ENCODE measurements at regions of chr3 and their contacts with region 1.

Region 1: GRCh38 chr3:97793420-97794019 is 28.3 kb upstream of the CRYBG3 start:
- DNase-seq: peak; percentile 80
- H3K4me3 Mint-ChIP-seq: no peak overlapping the region
- H3K27ac Mint-ChIP-seq: no peak overlapping the region
- H3K4me1 Mint-ChIP-seq: no peaks in the 10 kb centered on the region
- H3K27me3 Mint-ChIP-seq: no peaks in the 10 kb centered on the region

Region 2: DNA sequence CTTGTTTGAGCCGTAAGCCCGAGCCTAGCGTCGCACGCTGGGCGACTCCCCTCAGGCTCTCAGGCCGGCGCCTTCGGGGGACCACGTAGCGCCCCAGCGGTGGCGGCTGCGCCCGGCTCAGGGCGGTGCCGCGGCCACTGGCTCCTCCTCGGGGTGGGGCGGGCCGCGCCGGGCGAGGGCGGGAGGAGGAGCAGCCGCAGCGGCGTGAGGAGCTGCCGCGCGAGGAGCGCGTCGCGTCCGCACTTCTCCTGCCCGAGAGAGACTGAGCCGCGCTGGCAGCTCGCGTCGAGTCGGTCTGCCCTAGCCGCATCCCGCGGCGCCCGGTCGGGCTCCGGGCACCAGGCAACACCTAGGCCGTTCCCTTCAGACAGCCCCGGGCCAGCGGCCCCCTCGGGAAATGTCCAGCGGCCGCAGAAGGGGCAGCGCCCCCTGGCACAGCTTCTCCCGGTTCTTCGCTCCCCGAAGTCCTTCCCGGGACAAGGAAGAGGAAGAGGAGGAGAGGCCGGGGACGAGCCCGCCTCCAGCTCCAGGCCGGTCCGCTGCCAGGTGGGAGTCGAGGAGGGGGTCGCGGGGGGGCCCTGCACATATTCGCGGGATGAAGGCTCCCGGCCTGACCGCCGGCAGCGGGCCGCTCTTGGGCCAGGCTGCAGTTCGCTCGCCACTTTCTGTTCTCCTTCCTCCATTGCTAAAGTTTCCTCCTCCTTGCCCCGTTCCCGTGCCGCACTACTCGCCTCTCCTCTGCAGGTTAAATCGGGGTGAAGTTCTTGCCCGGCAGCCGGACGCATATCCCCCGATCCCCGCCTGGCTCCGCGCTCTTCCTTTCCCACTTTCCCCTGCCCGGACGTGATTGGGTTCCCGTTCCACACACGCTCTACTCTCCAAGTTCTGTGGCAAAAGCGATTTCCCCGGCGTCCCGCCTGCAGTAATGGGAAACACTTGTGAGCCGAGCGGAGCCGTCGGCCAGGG is 28.6 kb after region 1 on chr3 and contains the start of gene CRYBG3:
- intact Hi-C with region 1: loop called (anchors 2 kb)
- DNase-seq: peak; percentile 97
- H3K4me3 Mint-ChIP-seq: peak within 1 kb of the TSS; percentile 99
- H3K27ac Mint-ChIP-seq: peak within 1 kb of the TSS; percentile 95
- H3K4me1 Mint-ChIP-seq: peaks cover 32% of the 10 kb centered on the region
- H3K27me3 Mint-ChIP-seq: peaks cover 33% of the 10 kb centered on the region
- total RNA-seq, gene CRYBG3: 8.1 and 8.3 TPM in 2 replicates

Region 3: DNA sequence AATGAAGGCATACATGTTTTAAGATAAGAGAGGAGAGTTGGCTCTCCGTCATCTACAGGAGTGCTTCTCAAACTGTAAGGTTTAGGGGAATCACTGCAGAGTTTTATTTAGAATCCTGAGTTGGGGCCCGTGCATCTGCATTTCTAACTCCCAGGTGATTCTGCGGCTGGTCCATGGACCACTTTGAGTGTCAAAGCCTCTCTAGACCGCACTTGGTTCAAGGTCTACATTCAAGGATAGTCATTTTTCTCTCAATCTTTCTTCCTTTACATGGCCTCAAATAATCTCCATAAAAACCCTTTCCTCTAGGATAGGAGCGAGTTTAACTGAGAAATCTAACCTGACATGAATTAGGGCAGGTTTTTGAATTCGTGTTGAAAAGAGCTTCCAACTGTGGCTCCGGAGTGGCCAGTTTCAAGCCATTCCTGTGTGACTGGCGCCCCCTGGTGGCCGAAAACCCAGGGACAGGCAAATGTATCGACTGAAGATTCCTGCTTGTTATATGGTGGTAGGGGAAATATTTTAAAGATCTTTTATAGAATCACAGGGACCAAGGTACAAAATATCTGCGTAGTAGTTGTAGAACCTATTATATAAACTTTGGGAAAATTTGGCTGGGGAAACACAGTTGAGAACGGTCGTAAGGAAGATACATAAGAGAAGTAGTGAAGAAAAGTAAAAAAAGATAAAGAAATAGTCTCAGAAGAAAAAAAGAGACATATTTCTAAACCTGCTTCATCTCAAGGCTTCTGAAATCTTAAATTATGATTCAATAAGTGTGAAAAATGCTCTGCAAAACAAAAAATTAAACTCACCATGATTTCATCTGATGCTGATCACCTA is 229.7 kb after region 1 on chr3:
- intact Hi-C with region 1: loop called (anchors 1 kb)
- DNase-seq: peak; percentile 97
- H3K4me3 Mint-ChIP-seq: peak overlapping the region; percentile 13
- H3K27ac Mint-ChIP-seq: peak overlapping the region; percentile 25
- H3K4me1 Mint-ChIP-seq: peaks cover 16% of the 10 kb centered on the region
- H3K27me3 Mint-ChIP-seq: no peaks in the 10 kb centered on the region